ENCODE measurements at regions of chr3 and their contacts with region 1.

Region 1: DNA sequence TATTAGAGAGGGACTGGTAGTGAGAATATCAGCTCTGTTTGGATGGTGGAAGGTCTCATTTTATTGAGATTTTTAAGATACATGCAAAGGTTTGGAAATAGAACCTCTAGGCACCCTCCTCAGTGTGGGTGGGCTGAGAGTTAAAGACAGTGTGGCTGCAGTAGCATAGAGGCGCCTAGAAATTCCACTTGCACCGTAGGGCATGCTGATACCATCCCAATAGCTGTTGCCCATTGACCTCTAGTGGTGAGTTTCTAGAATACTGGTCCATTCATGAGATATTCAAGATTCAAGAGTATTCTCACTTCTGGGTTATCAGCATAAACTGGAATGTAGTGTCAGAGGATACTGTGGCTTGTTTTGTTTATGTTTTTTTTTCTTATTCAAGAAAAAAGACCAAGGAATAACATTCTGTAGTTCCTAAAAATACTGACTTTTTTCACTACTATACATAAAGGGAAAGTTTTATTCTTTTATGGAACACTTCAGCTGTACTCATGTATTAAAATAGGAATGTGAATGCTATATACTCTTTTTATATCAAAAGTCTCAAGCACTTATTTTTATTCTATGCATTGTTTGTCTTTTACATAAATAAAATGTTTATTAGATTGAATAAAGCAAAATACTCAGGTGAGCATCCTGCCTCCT is 87.2 kb downstream of the TGFBR2 start:
- DNase-seq: no peak
- ATAC-seq: peak; percentile 91
- H3K4me3 Mint-ChIP-seq: no peak overlapping the region
- H3K27ac Mint-ChIP-seq: peak overlapping the region; percentile 76
- H3K4me1 Mint-ChIP-seq: peaks cover 67% of the 10 kb centered on the region
- H3K27me3 Mint-ChIP-seq: no peaks in the 10 kb centered on the region
- CTCF ChIP-seq: no peak

Region 2: DNA sequence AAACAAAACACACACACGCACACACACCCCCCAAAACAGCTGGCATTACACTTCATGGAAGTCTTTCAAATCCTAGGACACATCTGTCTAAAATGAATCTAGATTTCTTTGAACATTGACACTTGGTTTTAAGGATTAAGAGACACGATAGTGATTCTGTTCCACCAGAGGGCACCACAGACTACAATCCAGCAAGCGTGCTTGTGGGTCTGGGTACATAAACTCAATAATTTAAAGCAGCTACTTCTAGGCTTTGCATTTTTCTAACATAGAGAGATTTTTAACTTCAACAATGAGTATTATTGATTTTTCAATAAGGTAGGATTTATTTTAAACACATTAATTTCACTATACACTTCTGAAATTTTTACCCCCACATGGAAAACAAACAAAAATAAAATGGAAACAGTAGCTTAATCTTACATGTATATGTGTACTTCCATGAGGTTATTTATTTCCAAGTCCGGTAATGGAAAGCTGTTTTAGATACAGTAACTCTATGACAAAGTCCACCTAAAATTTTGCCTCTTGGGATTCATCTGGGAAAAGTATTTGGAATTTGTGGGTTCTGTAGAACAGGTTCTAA is 651.2 kb before region 1 on chr3:
- CTCF ChIA-PET with region 1: interaction called, 34 read pairs
- POLR2A ChIA-PET with region 1: no interaction called
- intact Hi-C with region 1: loop called (anchors 1 kb)
- DNase-seq: no peak
- ATAC-seq: no peak
- H3K4me3 Mint-ChIP-seq: no peak overlapping the region
- H3K27ac Mint-ChIP-seq: no peak overlapping the region
- H3K4me1 Mint-ChIP-seq: no peaks in the 10 kb centered on the region
- H3K27me3 Mint-ChIP-seq: peaks cover 7% of the 10 kb centered on the region
- CTCF ChIP-seq: no peak

Region 3: GRCh38 chr3:30199096-30199759 is 494.4 kb before region 1 on chr3:
- CTCF ChIA-PET with region 1: interaction called, 49 read pairs
- POLR2A ChIA-PET with region 1: interaction called, 4 read pairs
- intact Hi-C with region 1: loop called (anchors 1 kb)
- DNase-seq: peak; percentile 16
- ATAC-seq: peak; percentile 31
- H3K4me3 Mint-ChIP-seq: no peak overlapping the region
- H3K27ac Mint-ChIP-seq: no peak overlapping the region
- H3K4me1 Mint-ChIP-seq: peaks cover 12% of the 10 kb centered on the region
- H3K27me3 Mint-ChIP-seq: no peaks in the 10 kb centered on the region
- CTCF ChIP-seq: peak; percentile 73

Region 4: GRCh38 chr3:30319713-30320112 is 373.9 kb before region 1 on chr3:
- CTCF ChIA-PET with region 1: interaction called, 44 read pairs
- POLR2A ChIA-PET with region 1: interaction called, 4 read pairs
- intact Hi-C with region 1: loop called (anchors 1 kb)
- DNase-seq: no peak
- ATAC-seq: peak; percentile 98
- H3K4me3 Mint-ChIP-seq: no peak overlapping the region
- H3K27ac Mint-ChIP-seq: no peak overlapping the region
- H3K4me1 Mint-ChIP-seq: peaks cover 6% of the 10 kb centered on the region
- H3K27me3 Mint-ChIP-seq: no peaks in the 10 kb centered on the region
- CTCF ChIP-seq: peak; percentile 46

Region 5: DNA sequence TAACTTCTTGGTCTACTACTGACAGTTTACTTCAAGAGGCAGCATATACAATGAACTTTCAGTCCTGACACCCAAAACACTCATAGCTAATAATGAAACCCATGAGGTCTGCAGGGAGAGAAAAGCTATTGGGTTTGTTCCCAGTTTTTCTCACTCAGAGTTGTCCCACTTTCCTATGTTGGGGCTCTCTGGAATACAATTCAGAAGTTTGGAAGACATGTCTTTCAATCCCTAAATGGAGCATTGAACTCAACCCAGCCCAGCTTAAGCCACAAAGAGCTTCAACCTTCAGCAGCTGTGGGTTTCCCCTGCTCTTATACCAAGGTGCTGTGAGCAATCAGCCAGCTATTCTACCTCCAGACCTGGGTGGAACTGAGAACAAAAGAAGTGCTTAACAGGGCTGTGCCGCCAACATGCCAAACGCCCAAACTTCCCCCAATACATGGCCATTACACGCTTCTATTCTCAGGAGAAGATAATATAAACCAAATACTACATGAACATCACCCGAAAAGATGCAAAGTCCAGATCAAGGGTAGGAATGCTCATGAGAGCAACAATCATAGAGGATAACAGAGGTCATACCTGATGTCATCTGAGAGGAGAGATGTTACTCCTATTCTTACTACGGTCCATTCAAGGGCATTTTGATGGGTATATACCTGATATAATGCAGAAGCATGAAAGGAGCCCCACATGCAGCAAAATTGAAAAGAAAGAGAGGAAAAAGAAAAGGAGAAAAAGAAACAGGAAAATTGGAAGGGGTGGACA is 218.4 kb before region 1 on chr3:
- CTCF ChIA-PET with region 1: no interaction called
- POLR2A ChIA-PET with region 1: interaction called, 4 read pairs
- intact Hi-C with region 1: loop called (anchors 2 kb)
- DNase-seq: no peak
- ATAC-seq: peak; percentile 94
- H3K4me3 Mint-ChIP-seq: peak overlapping the region; percentile 54
- H3K27ac Mint-ChIP-seq: peak overlapping the region; percentile 75
- H3K4me1 Mint-ChIP-seq: peaks cover 76% of the 10 kb centered on the region
- H3K27me3 Mint-ChIP-seq: no peaks in the 10 kb centered on the region
- CTCF ChIP-seq: no peak

Region 6: DNA sequence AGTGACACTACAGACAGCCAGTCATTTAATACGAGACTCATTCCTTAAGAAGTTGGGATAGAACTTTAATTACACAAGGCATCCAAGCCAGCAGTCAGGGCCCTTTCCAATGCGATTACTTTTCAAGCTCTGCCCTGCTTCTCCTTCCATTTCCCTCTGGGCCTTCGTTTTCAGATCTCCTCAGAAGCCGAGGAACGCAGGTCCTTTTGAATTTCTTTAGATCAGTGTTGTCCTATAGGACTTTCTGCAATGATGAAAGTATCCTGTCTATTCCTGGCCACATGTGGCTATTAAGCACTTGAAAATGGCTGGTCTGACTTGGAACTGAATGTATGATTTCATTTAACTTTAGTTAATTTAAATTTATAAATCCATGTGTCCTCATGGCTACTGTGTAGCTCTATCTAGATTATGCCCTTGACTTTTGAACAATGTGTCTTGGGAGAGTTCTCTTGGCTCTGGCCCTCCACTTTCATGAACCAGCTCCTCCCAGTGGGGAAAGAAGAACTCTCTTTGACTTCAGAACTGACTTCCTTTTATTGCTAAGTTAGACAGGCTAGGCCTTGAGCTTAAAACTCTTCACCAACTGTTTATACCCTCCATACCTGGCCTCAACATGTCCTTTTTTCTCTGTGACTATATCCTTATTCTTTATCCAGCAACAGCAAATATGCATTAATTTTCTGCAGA is 64.5 kb before region 1 on chr3:
- CTCF ChIA-PET with region 1: interaction called, 22 read pairs
- POLR2A ChIA-PET with region 1: interaction called, 3 read pairs
- intact Hi-C with region 1: loop called (anchors 2 kb)
- DNase-seq: no peak
- ATAC-seq: peak; percentile 52
- H3K4me3 Mint-ChIP-seq: peak overlapping the region; percentile 49
- H3K27ac Mint-ChIP-seq: peak overlapping the region; percentile 91
- H3K4me1 Mint-ChIP-seq: peaks cover 94% of the 10 kb centered on the region
- H3K27me3 Mint-ChIP-seq: no peaks in the 10 kb centered on the region
- CTCF ChIP-seq: no peak